ENCODE measurements at regions of chr7 and their contacts with region 1.

Region 1: GRCh38 chr7:114865564-114865963 is 56.3 kb upstream of the MDFIC start:
- DNase-seq: peak in 1 of 2 experiments; percentile 55
- H3K4me3 ChIP-seq: no peak overlapping the region
- H3K27ac ChIP-seq: no peak overlapping the region
- H3K4me1 ChIP-seq: no peaks in the 10 kb centered on the region
- H3K27me3 ChIP-seq: no peaks in the 10 kb centered on the region
- CTCF ChIP-seq: peak; percentile 64 to 79 (median 75)
- EP300 ChIP-seq: no peak
- POLR2A ChIP-seq: no peak
- RAD21 ChIP-seq: peak; percentile 95 to 98

Region 2: DNA sequence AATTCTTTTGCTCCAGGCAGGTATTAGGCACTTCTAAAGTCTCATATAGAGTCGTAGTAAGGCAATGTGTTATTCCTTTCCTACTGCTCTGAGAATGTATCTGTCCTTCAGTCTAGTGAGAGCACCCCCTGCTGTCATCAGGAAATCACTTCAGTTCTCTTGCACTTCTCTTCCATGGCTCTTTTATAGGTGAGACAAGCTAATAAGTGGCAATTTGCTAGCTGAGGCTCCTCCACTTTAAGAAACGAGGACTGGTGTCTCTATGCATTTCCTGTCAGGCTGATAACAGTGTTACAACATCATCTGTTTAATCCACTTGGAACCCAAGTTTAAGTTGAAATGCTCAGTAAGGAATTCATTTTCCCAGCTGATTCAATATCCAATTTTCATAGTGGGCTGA is 814.4 kb after region 1 on chr7:
- CTCF ChIA-PET with region 1: interaction called, 12 read pairs
- POLR2A ChIA-PET with region 1: no interaction called
- DNase-seq: no peak
- H3K4me3 ChIP-seq: no peak overlapping the region
- H3K27ac ChIP-seq: no peak overlapping the region
- H3K4me1 ChIP-seq: peaks cover 0 to 6% (median 1%) of the 10 kb centered on the region in 4 experiments; a peak in 2 of 7 replicates
- H3K27me3 ChIP-seq: peaks cover 0 to 1% (median 0%) of the 10 kb centered on the region in 4 experiments; a peak in 1 of 7 replicates
- CTCF ChIP-seq: peak in 2 of 3 experiments; percentile 25 to 55; a peak in 2 of 4 replicates
- EP300 ChIP-seq: no peak
- POLR2A ChIP-seq: no peak
- RAD21 ChIP-seq: peak; percentile 55 to 56

Measured in H1 (cell line).